MCF 10A (cell line): ENCODE measurements at regions of chr7 and their contacts with region 1.

Region 1: GRCh38 chr7:106279425-106280197 is 5.2 kb downstream of the NAMPT start:
- DNase-seq: no peak
- H3K4me3 Mint-ChIP-seq: peak overlapping the region; percentile 100
- H3K27ac Mint-ChIP-seq: peak overlapping the region; percentile 28
- H3K4me1 Mint-ChIP-seq: peaks cover 29% of the 10 kb centered on the region
- H3K27me3 Mint-ChIP-seq: no peaks in the 10 kb centered on the region
- CTCF ChIP-seq: no peak

Region 2: GRCh38 chr7:106143711-106144337 is 135.8 kb before region 1 on chr7:
- CTCF ChIA-PET with region 1: no interaction called
- POLR2A ChIA-PET with region 1: no interaction called
- intact Hi-C with region 1: no loop called
- DNase-seq: no peak
- H3K4me3 Mint-ChIP-seq: no peak overlapping the region
- H3K27ac Mint-ChIP-seq: no peak overlapping the region
- H3K4me1 Mint-ChIP-seq: no peaks in the 10 kb centered on the region
- H3K27me3 Mint-ChIP-seq: no peaks in the 10 kb centered on the region
- CTCF ChIP-seq: no peak

Region 3: DNA sequence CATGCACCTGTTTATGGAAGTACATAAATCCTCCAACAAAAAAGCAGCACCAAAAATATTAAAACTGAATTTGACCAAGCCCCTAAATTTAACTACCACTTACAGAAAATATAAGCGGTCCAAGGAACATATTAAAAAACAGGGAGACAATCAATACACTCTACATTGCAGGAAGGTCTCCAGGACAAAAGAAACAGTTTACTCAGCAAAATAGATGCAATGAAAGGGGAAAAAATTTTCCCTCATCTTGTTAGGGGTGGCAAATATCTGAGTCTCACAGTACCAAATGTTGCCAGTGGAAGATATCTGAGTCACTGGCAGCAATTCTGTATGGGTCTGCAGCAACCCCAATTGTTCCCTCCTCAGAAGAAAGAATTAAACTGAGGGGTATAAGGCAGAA is 45.2 kb before region 1 on chr7:
- CTCF ChIA-PET with region 1: no interaction called
- POLR2A ChIA-PET with region 1: no interaction called
- intact Hi-C with region 1: no loop called
- DNase-seq: no peak
- H3K4me3 Mint-ChIP-seq: no peak overlapping the region
- H3K27ac Mint-ChIP-seq: no peak overlapping the region
- H3K4me1 Mint-ChIP-seq: no peaks in the 10 kb centered on the region
- H3K27me3 Mint-ChIP-seq: no peaks in the 10 kb centered on the region
- CTCF ChIP-seq: no peak

Region 4: GRCh38 chr7:106260136-106260561 is 19.5 kb before region 1 on chr7:
- CTCF ChIA-PET with region 1: interaction called, 4 read pairs
- POLR2A ChIA-PET with region 1: interaction called, 14 read pairs
- intact Hi-C with region 1: no loop called
- DNase-seq: no peak
- H3K4me3 Mint-ChIP-seq: no peak overlapping the region
- H3K27ac Mint-ChIP-seq: peak overlapping the region; percentile 49
- H3K4me1 Mint-ChIP-seq: peaks cover 17% of the 10 kb centered on the region
- H3K27me3 Mint-ChIP-seq: no peaks in the 10 kb centered on the region
- CTCF ChIP-seq: no peak

Region 5: DNA sequence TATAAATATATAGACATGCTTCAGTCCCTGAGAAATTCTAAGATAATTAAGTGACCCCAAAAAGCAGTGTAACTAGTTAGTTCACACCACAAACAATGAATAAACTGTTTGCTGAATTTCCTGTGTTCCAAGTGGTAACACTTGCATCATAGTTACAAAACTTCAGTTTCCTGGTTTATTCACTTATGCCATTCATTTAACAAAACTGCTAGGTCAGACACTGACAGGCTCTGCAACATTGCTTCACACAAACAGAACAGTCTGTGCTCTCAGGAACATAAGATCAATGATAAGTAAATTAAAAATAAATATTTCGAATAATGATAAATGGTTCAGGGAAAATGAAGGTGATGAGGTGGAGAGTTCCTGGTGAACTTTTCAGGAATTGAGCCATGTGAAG is 138.5 kb after region 1 on chr7:
- CTCF ChIA-PET with region 1: interaction called, 4 read pairs
- POLR2A ChIA-PET with region 1: interaction called, 94 read pairs
- intact Hi-C with region 1: loop called (anchors 2 kb)
- DNase-seq: peak; percentile 77
- H3K4me3 Mint-ChIP-seq: no peak overlapping the region
- H3K27ac Mint-ChIP-seq: peak overlapping the region; percentile 89
- H3K4me1 Mint-ChIP-seq: peaks cover 43% of the 10 kb centered on the region
- H3K27me3 Mint-ChIP-seq: no peaks in the 10 kb centered on the region
- CTCF ChIP-seq: no peak

Region 6: GRCh38 chr7:106425017-106425719 is 145.6 kb after region 1 on chr7:
- CTCF ChIA-PET with region 1: interaction called, 7 read pairs
- POLR2A ChIA-PET with region 1: interaction called, 94 read pairs
- intact Hi-C with region 1: no loop called
- DNase-seq: peak; percentile 99
- H3K4me3 Mint-ChIP-seq: peak overlapping the region; percentile 68
- H3K27ac Mint-ChIP-seq: peak overlapping the region; percentile 91
- H3K4me1 Mint-ChIP-seq: peaks cover 53% of the 10 kb centered on the region
- H3K27me3 Mint-ChIP-seq: no peaks in the 10 kb centered on the region
- CTCF ChIP-seq: no peak